Endothelial cell of umbilical vein (primary cell): ENCODE measurements at regions of chr3 and their contacts with region 1.

Region 1: DNA sequence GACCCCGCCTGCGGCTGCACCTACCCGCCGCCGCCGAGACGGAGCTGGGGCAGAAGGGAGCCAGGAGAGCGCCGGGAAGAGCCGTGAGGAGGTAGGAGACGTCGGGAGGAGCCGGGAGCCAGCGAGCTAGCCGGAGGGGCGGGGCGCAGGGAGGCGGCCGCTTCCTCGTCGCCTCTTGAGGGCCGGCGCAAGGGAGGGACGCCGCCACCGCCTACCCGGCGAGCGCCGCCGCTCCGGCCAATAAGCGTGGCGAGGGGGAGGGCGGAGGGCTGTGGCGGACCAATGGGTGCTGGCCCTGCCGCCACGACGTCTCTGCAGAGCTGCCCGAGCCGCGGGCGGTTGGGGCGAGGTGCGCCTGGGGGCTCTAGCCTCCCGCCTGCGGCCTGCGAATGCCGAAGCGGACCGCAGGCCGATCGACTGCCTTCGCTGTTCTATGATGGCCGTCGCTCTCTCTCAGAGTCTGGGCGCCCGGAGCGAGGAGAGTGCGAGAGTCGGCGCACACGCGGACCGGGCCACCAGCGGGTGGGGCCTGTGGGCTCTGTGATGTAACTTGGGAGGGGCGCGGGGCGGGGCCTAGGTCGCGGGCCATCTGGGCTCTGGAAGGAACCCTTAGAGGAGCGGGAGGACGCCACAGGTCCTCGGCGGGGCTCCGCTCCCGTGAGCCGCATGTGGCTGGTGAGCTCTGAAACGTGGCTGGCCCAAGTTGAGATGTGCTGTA is 72.7 kb upstream of the MAP4 start:
- DNase-seq: peak; percentile 99
- H3K4me3 ChIP-seq: peak overlapping the region; percentile 83 to 94 (median 94)
- H3K27ac ChIP-seq: peak overlapping the region; percentile 70
- H3K4me1 ChIP-seq: peaks cover 18% of the 10 kb centered on the region
- H3K27me3 ChIP-seq: no peaks in the 10 kb centered on the region
- CTCF ChIP-seq: no peak
- POLR2A ChIP-seq: peak; percentile 80

Region 2: GRCh38 chr3:46797458-46797857 is 1291.5 kb before region 1 on chr3:
- CTCF ChIA-PET with region 1: no interaction called
- POLR2A ChIA-PET with region 1: no interaction called
- dilution Hi-C with region 1: no loop called
- intact Hi-C with region 1: no loop called
- DNase-seq: no peak
- H3K4me3 ChIP-seq: no peak overlapping the region
- H3K27ac ChIP-seq: no peak overlapping the region
- H3K4me1 ChIP-seq: no peaks in the 10 kb centered on the region
- H3K27me3 ChIP-seq: peaks cover 0 to 27% of the 10 kb centered on the region in 2 experiments
- CTCF ChIP-seq: no peak
- POLR2A ChIP-seq: no peak

Region 3: DNA sequence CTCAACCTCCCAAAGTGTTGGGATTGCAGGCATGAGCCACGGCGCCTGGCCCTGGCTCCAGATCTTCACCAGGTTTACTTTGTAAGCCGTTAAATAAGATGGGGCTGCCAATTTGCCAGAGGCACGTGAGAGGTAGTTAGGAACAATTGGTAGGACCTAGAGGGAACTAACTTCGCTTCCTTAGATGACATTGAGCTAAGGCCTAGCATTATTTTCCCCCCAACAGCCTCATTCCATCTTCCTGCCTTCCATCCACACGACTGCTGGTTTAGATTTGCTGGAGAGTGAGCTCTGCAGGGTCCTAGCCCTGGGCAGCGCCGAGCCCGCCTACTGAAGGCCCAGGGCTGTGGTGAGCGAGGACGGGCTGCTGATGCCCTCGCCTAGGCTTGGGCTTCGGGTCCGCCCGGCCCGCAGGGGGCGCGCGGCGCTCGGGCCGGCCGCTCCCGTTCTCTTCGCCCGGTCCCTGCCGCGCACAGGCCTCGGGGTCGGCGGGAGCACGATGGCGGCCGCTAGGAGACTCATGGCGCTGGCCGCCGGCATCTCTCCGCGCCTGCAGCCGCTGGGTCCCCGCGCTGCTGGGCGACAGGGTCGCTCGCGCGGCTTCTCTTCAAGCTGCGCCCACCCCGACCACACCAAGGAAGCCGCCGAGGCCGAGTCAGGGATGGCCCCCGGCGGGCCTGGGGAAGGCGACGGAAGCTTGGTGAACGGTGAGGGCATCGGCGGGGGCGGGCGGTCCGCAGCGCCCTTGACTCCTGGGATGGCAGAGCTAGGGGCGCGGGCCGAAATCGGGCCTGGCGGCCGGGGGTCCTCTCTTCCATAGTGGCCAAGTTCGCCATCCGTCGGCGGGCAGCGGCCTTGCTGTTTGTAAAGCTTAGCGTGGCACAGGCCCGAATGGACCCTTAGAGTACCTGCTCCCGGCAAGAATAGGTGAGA is 264.1 kb before region 1 on chr3:
- CTCF ChIA-PET with region 1: interaction called, 6 read pairs
- POLR2A ChIA-PET with region 1: interaction called, 3 read pairs
- dilution Hi-C with region 1: no loop called
- intact Hi-C with region 1: loop called (anchors 5 kb)
- DNase-seq: peak; percentile 85
- H3K4me3 ChIP-seq: peak overlapping the region; percentile 78 to 97 (median 82)
- H3K27ac ChIP-seq: peak overlapping the region; percentile 68
- H3K4me1 ChIP-seq: peaks cover 19% of the 10 kb centered on the region
- H3K27me3 ChIP-seq: no peaks in the 10 kb centered on the region
- CTCF ChIP-seq: peak; percentile 82 to 96
- POLR2A ChIP-seq: peak; percentile 83

Region 4: GRCh38 chr3:48013288-48013980 is 75.5 kb before region 1 on chr3:
- CTCF ChIA-PET with region 1: interaction called, 4 read pairs
- POLR2A ChIA-PET with region 1: no interaction called
- dilution Hi-C with region 1: no loop called
- intact Hi-C with region 1: loop called (anchors 5 kb)
- DNase-seq: peak; percentile 60
- H3K4me3 ChIP-seq: no peak overlapping the region
- H3K27ac ChIP-seq: peak overlapping the region; percentile 16
- H3K4me1 ChIP-seq: peaks cover 39% of the 10 kb centered on the region
- H3K27me3 ChIP-seq: no peaks in the 10 kb centered on the region
- CTCF ChIP-seq: no peak
- POLR2A ChIP-seq: no peak

Region 5: DNA sequence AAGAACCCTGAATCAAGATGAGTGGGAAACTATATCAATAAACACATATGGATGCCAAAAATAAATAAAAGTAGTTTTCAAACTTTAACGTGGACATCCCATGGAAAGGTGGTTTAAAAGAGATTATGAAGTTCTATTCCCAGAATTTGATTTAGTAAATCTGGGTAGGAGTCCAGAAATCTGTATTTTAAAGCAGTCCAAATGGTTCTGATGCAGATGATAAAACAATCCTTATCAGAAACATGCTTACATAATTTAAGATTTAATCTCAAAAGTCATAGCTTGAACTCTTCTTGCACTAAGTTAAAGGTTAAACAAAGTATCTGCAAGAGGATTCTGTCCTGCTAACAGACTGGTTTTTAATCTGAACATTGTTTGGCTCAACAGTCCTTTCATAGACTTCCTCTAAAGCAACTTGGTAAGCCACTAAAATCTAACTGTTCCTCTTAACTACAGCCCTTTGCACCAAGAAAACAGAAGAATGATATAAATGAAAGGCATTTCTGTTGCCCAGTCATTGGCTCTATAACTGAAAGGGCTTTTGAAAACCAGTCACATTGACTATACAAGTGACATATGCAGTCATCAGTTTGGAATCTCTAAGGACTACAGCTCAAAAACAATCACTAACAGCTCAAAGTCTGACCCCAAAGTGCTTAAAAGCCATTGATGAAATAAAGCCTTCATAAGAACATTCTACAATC is 49.3 kb before region 1 on chr3:
- CTCF ChIA-PET with region 1: no interaction called
- POLR2A ChIA-PET with region 1: no interaction called
- dilution Hi-C with region 1: no loop called
- intact Hi-C with region 1: loop called (anchors 2 kb)
- DNase-seq: peak; percentile 71
- H3K4me3 ChIP-seq: no peak overlapping the region
- H3K27ac ChIP-seq: peak overlapping the region; percentile 79
- H3K4me1 ChIP-seq: peaks cover 17% of the 10 kb centered on the region
- H3K27me3 ChIP-seq: no peaks in the 10 kb centered on the region
- CTCF ChIP-seq: no peak
- POLR2A ChIP-seq: no peak

Region 6: GRCh38 chr3:48130321-48130904 is 41.5 kb after region 1 on chr3:
- CTCF ChIA-PET with region 1: interaction called, 4 read pairs
- POLR2A ChIA-PET with region 1: interaction called, 5 read pairs
- dilution Hi-C with region 1: no loop called
- intact Hi-C with region 1: loop called (anchors 2 kb)
- DNase-seq: peak; percentile 96
- H3K4me3 ChIP-seq: no peak overlapping the region
- H3K27ac ChIP-seq: peak overlapping the region; percentile 64
- H3K4me1 ChIP-seq: peaks cover 13% of the 10 kb centered on the region
- H3K27me3 ChIP-seq: no peaks in the 10 kb centered on the region
- CTCF ChIP-seq: no peak
- POLR2A ChIP-seq: peak; percentile 35

Region 7: GRCh38 chr3:48256557-48256956 is 167.6 kb after region 1 on chr3:
- CTCF ChIA-PET with region 1: no interaction called
- POLR2A ChIA-PET with region 1: no interaction called
- dilution Hi-C with region 1: no loop called
- intact Hi-C with region 1: no loop called
- DNase-seq: no peak
- H3K4me3 ChIP-seq: no peak overlapping the region
- H3K27ac ChIP-seq: no peak overlapping the region
- H3K4me1 ChIP-seq: no peaks in the 10 kb centered on the region
- H3K27me3 ChIP-seq: no peaks in the 10 kb centered on the region
- CTCF ChIP-seq: no peak
- POLR2A ChIP-seq: no peak